GM12878 (cell line): ENCODE measurements at regions of chr7 and their contacts with region 1.

Region 1: GRCh38 chr7:15419596-15419995 is 142.2 kb downstream of the AGMO start:
- DNase-seq: no peak
- ATAC-seq: no peak
- H3K4me3 ChIP-seq: no peak overlapping the region
- H3K27ac ChIP-seq: no peak overlapping the region
- H3K4me1 ChIP-seq: no peaks in the 10 kb centered on the region
- H3K27me3 ChIP-seq: no peaks in the 10 kb centered on the region
- CTCF ChIP-seq: no peak
- EP300 ChIP-seq: no peak
- POLR2A ChIP-seq: no peak
- RAD21 ChIP-seq: no peak

Region 2: DNA sequence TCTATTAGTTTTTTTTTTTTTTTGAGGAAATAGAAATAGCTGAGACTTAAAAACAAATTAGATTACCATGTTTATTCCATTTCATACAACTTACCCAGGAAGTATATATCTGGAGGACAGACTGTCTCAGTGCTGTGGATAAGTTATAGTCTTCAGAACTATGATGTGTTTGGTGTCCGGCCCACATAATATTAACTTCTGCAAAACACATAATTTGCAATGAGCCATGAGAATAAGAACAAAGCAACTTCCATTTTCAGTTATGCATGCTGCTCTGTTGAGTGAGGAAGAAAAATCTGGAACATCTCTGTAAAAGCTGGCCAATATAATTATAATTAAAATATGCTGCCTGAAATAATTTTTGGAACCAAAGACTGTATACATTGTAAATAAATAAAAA is 11.3 kb after region 1 on chr7:
- CTCF ChIA-PET with region 1: interaction called, 3 read pairs
- POLR2A ChIA-PET with region 1: no interaction called
- RAD21 ChIA-PET with region 1: interaction called, 3 read pairs
- SMC1A ChIA-PET with region 1: interaction called, 11 read pairs
- in situ Hi-C with region 1: no loop called
- intact Hi-C with region 1: no loop called
- DNase-seq: no peak
- ATAC-seq: peak; percentile 24; the same call in 2 of the 3 replicates
- H3K4me3 ChIP-seq: no peak overlapping the region
- H3K27ac ChIP-seq: no peak overlapping the region
- H3K4me1 ChIP-seq: no peaks in the 10 kb centered on the region
- H3K27me3 ChIP-seq: no peaks in the 10 kb centered on the region
- CTCF ChIP-seq: no peak
- EP300 ChIP-seq: no peak
- POLR2A ChIP-seq: no peak
- RAD21 ChIP-seq: no peak

Region 3: GRCh38 chr7:15498465-15498864 is 78.9 kb after region 1 on chr7:
- CTCF ChIA-PET with region 1: no interaction called
- POLR2A ChIA-PET with region 1: no interaction called
- RAD21 ChIA-PET with region 1: no interaction called
- SMC1A ChIA-PET with region 1: no interaction called
- in situ Hi-C with region 1: no loop called
- intact Hi-C with region 1: no loop called
- DNase-seq: no peak
- ATAC-seq: no peak
- H3K4me3 ChIP-seq: no peak overlapping the region
- H3K27ac ChIP-seq: no peak overlapping the region
- H3K4me1 ChIP-seq: no peaks in the 10 kb centered on the region
- H3K27me3 ChIP-seq: no peaks in the 10 kb centered on the region
- CTCF ChIP-seq: no peak
- EP300 ChIP-seq: no peak
- POLR2A ChIP-seq: no peak
- RAD21 ChIP-seq: no peak

Region 4: GRCh38 chr7:15985587-15986384 is 566.2 kb after region 1 on chr7:
- CTCF ChIA-PET with region 1: no interaction called
- POLR2A ChIA-PET with region 1: no interaction called
- RAD21 ChIA-PET with region 1: no interaction called
- SMC1A ChIA-PET with region 1: no interaction called
- in situ Hi-C with region 1: no loop called
- intact Hi-C with region 1: no loop called
- DNase-seq: no peak
- ATAC-seq: no peak
- H3K4me3 ChIP-seq: no peak overlapping the region
- H3K27ac ChIP-seq: no peak overlapping the region
- H3K4me1 ChIP-seq: no peaks in the 10 kb centered on the region
- H3K27me3 ChIP-seq: no peaks in the 10 kb centered on the region
- CTCF ChIP-seq: no peak
- EP300 ChIP-seq: no peak
- POLR2A ChIP-seq: no peak
- RAD21 ChIP-seq: no peak